Activated naive CD4-positive, alpha-beta T cell treated with anti-CD3 and anti-CD28 coated beads for 36 hours (primary cell): ENCODE measurements at regions of chr4 and their contacts with region 1.

Region 1: DNA sequence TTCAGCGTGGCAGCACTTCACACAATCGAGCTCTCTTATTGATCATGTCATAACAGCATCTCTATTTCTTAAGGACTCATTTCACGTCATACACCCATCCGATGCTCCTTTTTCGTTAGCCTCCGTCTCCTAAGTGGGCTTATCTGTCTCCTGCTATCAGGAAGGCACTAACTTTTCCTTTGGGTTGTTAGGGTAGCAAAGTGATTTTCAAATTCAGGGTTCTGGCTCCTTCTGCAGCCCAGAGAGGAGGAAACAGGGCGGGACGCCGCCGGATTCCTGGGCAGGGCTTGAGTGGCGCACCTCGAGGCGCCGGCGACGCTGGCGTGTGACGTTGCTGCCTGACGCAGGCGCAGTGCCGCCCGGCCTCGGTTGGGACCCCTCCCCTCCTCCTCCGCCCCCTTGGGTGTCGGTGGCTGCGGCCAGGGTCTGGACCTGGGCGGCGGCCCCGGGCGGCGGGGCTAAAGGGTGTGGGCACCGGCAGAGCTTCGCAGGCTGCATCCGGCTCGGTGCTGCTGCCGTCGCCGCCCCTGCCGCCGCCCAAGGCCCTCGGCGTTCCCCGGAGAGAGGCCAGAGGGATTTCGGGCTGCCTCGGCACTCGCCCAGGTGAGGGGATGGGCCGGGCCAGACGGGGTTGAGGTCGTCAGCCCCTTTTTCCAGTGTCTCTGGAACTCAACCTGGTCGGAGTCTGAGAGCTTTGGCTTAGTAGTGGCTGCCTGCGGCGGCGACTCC is at the start of gene BLTP1:
- DNase-seq: peak; percentile 88
- H3K4me3 Mint-ChIP-seq: peak within 1 kb of the TSS; percentile 95
- H3K27ac Mint-ChIP-seq: peak within 1 kb of the TSS; percentile 96
- H3K4me1 Mint-ChIP-seq: peaks cover 52% of the 10 kb centered on the region
- H3K27me3 Mint-ChIP-seq: no peaks in the 10 kb centered on the region
- total RNA-seq, gene BLTP1: 20.5 to 23.6 TPM

Region 2: GRCh38 chr4:121696581-121697461 is 455.3 kb before region 1 on chr4 and contains the start of gene ANXA5:
- CTCF ChIA-PET with region 1: no interaction called
- intact Hi-C with region 1: loop called (anchors 5 kb)
- DNase-seq: peak; percentile 79
- H3K4me3 Mint-ChIP-seq: peak within 1 kb of the TSS; percentile 93
- H3K27ac Mint-ChIP-seq: peak within 1 kb of the TSS; percentile 91
- H3K4me1 Mint-ChIP-seq: peaks cover 11% of the 10 kb centered on the region
- H3K27me3 Mint-ChIP-seq: peaks cover 14% of the 10 kb centered on the region
- total RNA-seq, gene ANXA5: 98.4 to 99.5 TPM

Region 3: GRCh38 chr4:121823505-121824170 is 328.5 kb before region 1 on chr4 and contains the start of gene CCNA2:
- CTCF ChIA-PET with region 1: no interaction called
- intact Hi-C with region 1: loop called (anchors 1 kb)
- DNase-seq: peak; percentile 99
- H3K4me3 Mint-ChIP-seq: peak within 1 kb of the TSS; percentile 98
- H3K27ac Mint-ChIP-seq: peak within 1 kb of the TSS; percentile 86
- H3K4me1 Mint-ChIP-seq: peaks cover 20% of the 10 kb centered on the region
- H3K27me3 Mint-ChIP-seq: no peaks in the 10 kb centered on the region
- total RNA-seq, gene CCNA2: 133 to 138 TPM

Region 4: GRCh38 chr4:121950212-121950679 is 201.9 kb before region 1 on chr4:
- CTCF ChIA-PET with region 1: interaction called, 4 read pairs
- intact Hi-C with region 1: loop called (anchors 2 kb)
- DNase-seq: peak; percentile 92
- H3K4me3 Mint-ChIP-seq: peak overlapping the region; percentile 86
- H3K27ac Mint-ChIP-seq: no peak overlapping the region
- H3K4me1 Mint-ChIP-seq: peaks cover 5% of the 10 kb centered on the region
- H3K27me3 Mint-ChIP-seq: peaks cover 32% of the 10 kb centered on the region

Region 5: DNA sequence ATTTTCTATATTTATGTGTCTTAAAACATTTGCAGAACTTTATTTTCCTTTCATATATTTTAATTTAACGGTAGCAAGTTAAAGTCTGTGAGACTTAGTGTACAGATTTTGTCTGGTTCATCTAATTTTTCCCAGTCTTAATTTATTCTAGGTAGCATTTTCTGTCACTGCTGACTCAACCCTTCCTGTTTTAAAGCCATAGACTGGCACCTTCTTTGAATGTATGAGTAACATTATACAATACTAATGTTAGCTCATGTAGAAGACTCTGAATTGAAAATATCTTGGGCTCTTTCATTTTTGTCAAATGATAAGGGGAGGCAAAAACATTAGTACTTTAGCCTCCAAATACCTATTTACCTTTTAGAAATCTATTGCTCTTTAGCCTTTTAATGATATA is 43.6 kb after region 1 on chr4:
- CTCF ChIA-PET with region 1: interaction called, 3 read pairs
- intact Hi-C with region 1: loop called (anchors 1 kb)
- DNase-seq: peak; percentile 8
- H3K4me3 Mint-ChIP-seq: no peak overlapping the region
- H3K27ac Mint-ChIP-seq: no peak overlapping the region
- H3K4me1 Mint-ChIP-seq: peaks cover 14% of the 10 kb centered on the region
- H3K27me3 Mint-ChIP-seq: no peaks in the 10 kb centered on the region

Region 6: GRCh38 chr4:122508083-122508482 is 355.9 kb after region 1 on chr4:
- CTCF ChIA-PET with region 1: no interaction called
- intact Hi-C with region 1: loop called (anchors 5 kb)
- DNase-seq: no peak
- H3K4me3 Mint-ChIP-seq: peak overlapping the region; percentile 53
- H3K27ac Mint-ChIP-seq: peak overlapping the region; percentile 98
- H3K4me1 Mint-ChIP-seq: peaks cover 89% of the 10 kb centered on the region
- H3K27me3 Mint-ChIP-seq: no peaks in the 10 kb centered on the region